Activated naive CD4-positive, alpha-beta T cell treated with anti-CD3 and anti-CD28 coated beads for 36 hours (primary cell): ENCODE measurements at regions of chr19 and their contacts with region 1.

Region 1: GRCh38 chr19:8005534-8006256 is at the start of gene ELAVL1:
- DNase-seq: peak; percentile 89
- H3K4me3 Mint-ChIP-seq: peak within 1 kb of the TSS; percentile 94
- H3K27ac Mint-ChIP-seq: peak within 1 kb of the TSS; percentile 78
- H3K4me1 Mint-ChIP-seq: peaks cover 35% of the 10 kb centered on the region
- H3K27me3 Mint-ChIP-seq: no peaks in the 10 kb centered on the region
- total RNA-seq, gene ELAVL1: 135 to 140 TPM

Region 2: DNA sequence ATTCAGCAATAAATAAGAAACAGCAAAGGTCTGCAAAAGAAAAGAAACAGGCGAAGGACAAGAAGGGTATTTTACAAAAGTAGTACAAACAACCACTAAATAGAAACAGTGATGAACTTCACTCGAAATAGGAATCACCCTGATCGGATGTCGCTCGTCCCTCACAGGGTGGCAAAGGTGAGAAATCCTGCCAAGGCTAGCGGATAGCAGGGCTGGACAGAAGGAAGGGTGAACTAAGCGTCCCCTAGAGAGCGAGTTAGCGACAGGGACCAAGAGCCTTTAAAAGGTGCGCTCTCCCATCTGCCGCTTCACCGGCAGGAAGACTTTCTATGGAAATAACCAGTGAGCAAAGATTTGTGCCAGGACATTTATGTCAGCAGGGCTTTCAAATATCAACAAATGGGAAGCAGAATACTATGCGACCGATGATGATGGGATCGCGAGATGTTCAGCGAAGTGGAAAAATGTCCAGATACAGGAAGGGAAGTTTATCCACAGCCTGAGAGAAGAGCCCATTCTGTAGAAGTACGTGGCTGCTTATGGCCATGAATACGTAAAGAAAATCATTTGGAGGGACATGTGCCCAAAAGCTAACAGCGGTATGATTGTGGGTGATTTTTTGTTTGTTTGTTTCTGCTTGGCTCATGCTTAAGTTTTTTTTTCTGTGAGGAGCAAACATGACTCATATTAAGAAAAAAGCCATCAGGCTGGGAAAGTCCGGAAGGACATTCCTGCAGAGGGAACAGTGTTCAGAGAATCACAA is 19.2 kb before region 1 on chr19:
- CTCF ChIA-PET with region 1: interaction called, 11 read pairs
- intact Hi-C with region 1: no loop called
- DNase-seq: no peak
- H3K4me3 Mint-ChIP-seq: no peak overlapping the region
- H3K27ac Mint-ChIP-seq: no peak overlapping the region
- H3K4me1 Mint-ChIP-seq: peaks cover 3% of the 10 kb centered on the region
- H3K27me3 Mint-ChIP-seq: no peaks in the 10 kb centered on the region

Region 3: DNA sequence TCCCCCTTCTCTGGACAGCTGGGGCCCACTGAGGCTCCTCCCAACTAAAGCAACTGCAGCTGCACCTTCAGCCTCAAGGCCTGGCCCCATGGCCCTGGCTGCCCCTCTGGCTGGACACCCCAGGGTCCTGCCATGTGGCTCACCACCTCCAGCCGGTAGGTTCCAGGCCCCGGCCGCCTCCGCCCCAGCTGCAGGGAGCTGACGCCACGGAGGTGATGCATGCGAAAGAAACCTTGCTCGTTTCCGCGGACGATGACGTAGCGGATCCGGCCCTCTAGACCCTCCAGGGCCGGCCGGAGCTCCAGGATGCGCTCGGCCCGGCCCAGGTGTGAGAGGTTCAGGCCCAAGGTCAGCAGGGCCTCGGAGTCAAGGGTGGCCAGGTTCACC is 60.2 kb after region 1 on chr19:
- CTCF ChIA-PET with region 1: no interaction called
- intact Hi-C with region 1: no loop called
- DNase-seq: no peak
- H3K4me3 Mint-ChIP-seq: no peak overlapping the region
- H3K27ac Mint-ChIP-seq: no peak overlapping the region
- H3K4me1 Mint-ChIP-seq: no peaks in the 10 kb centered on the region
- H3K27me3 Mint-ChIP-seq: no peaks in the 10 kb centered on the region

Region 4: GRCh38 chr19:8307965-8308866 is 302.5 kb after region 1 on chr19 and contains the start of gene CD320:
- CTCF ChIA-PET with region 1: no interaction called
- intact Hi-C with region 1: no loop called
- DNase-seq: peak; percentile 86
- H3K4me3 Mint-ChIP-seq: peak within 1 kb of the TSS; percentile 94
- H3K27ac Mint-ChIP-seq: peak within 1 kb of the TSS; percentile 90
- H3K4me1 Mint-ChIP-seq: peaks cover 39% of the 10 kb centered on the region
- H3K27me3 Mint-ChIP-seq: no peaks in the 10 kb centered on the region
- total RNA-seq, gene CD320: 37.6 to 40.1 TPM